HepG2 (cell line): ENCODE measurements at regions of chr15 and their contacts with region 1.

Region 1: DNA sequence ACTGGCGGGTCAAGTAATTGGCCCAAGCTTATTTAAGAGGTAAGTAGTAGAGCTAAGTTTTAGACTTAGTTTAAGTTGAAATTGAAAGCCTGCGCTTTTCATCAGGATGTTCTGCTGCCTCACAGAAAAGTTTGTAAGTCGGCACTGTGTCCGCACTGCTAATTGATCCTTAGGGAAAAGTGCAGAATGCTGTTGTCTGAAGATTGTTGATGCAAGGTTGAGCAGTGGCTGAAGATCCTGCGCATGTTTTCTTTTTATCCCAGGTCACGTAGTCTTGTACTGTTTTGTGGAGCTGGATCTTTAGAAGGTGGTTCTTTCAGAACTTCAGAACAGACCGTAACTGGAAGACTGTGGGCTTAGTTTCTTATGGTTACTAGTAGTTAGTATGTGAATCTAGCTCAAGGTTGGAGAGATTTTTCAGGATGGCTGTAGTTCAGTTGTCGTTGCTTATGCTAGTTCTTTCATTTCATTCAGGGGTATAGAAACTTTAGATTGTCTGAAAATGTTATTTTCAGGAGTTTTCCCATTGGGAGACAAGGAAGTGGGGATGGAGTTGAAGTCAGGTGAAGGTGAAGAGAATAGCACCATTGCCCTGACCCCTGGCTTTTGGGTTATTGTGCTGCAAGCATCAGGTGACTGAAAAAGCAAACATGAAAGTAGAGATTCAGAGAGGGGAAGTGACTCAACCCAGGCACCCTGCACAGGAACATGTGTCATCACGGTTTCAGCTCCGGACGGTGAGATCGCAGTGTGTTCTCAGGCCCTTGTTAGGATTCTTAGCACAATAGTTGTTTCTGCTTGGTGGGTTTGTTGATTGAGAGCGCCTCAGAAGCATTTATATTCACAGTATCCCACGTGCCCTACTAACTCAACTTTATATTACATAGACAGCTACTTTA is 32.8 kb downstream of the AKAP13 start:
- DNase-seq: peak; percentile 90
- ATAC-seq: peak; percentile 100
- H3K4me3 ChIP-seq: no peak overlapping the region
- H3K27ac ChIP-seq: peak overlapping the region; percentile 52
- H3K4me1 ChIP-seq: peaks cover 34% of the 10 kb centered on the region
- H3K27me3 ChIP-seq: no peaks in the 10 kb centered on the region; a peak in 1 of 5 replicates
- CTCF ChIP-seq: 0 out of 2 replicates have a peak, but pooled peaks have one; percentile 11
- EP300 ChIP-seq: peak; percentile 14 to 83; a peak in 2 of 4 replicates
- POLR2A ChIP-seq: no peak
- RAD21 ChIP-seq: no peak

Region 2: GRCh38 chr15:85394552-85395333 is 18.5 kb before region 1 on chr15:
- CTCF ChIA-PET with region 1: no interaction called
- POLR2A ChIA-PET with region 1: interaction called, 3 read pairs
- in situ Hi-C with region 1: no loop called
- intact Hi-C with region 1: loop called (anchors 2 kb)
- DNase-seq: peak; percentile 66
- ATAC-seq: peak; percentile 62
- H3K4me3 ChIP-seq: no peak overlapping the region
- H3K27ac ChIP-seq: peak overlapping the region; percentile 55
- H3K4me1 ChIP-seq: peaks cover 52% of the 10 kb centered on the region
- H3K27me3 ChIP-seq: no peaks in the 10 kb centered on the region
- CTCF ChIP-seq: no peak
- EP300 ChIP-seq: no peak
- POLR2A ChIP-seq: no peak
- RAD21 ChIP-seq: no peak